ENCODE measurements at regions of chr20 and their contacts with region 1.

Region 1: DNA sequence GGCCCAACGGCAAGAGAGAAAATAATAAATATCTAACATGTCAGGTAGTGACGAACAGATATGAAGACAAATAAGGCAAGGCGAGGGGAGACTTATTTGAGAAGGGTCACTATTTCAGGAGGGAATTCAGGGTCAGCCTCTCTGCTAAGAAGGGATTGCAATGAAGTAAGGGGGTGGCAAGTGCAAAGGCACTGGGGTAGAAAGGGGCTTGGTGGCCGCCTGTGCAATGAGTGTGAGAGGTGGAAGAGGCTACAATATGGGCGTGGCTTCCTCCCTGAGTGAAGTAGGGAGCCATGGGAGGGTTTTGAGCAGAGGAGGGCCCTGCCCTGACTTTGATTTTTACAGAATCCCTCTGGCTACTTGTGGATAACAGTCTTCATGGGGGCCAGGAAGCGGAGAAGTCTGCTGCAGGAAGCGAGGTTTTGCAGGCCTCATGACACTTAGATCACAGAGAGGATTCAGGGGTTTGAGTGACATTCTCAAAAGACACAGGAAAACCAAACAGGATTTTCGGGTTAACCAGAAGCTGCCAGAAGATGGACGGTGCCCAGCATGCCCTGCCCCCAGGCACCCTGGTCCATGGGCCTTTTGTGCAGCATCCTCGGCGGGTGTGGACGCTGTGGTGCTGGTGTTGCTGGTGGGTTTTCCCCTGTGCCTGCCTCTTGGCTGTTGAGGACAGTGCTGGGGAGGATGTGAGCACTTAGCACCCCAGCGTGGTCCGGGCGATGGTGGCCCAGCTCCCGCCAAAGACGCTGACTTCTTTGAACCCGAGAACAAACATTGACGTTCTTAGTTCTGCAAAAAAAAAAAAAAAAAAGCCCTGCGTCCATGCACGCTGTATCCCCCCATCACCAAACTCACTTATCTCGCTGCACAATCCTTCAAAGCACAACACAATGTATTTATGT is 124.2 kb upstream of the PTPN1 start:
- DNase-seq: no peak
- ATAC-seq: no peak
- H3K4me3 ChIP-seq: no peak overlapping the region
- H3K27ac ChIP-seq: peak overlapping the region; percentile 27
- H3K4me1 ChIP-seq: peaks cover 98% of the 10 kb centered on the region
- H3K27me3 ChIP-seq: no peaks in the 10 kb centered on the region
- CTCF ChIP-seq: no peak
- EP300 ChIP-seq: no peak
- POLR2A ChIP-seq: no peak
- RAD21 ChIP-seq: no peak

Region 2: DNA sequence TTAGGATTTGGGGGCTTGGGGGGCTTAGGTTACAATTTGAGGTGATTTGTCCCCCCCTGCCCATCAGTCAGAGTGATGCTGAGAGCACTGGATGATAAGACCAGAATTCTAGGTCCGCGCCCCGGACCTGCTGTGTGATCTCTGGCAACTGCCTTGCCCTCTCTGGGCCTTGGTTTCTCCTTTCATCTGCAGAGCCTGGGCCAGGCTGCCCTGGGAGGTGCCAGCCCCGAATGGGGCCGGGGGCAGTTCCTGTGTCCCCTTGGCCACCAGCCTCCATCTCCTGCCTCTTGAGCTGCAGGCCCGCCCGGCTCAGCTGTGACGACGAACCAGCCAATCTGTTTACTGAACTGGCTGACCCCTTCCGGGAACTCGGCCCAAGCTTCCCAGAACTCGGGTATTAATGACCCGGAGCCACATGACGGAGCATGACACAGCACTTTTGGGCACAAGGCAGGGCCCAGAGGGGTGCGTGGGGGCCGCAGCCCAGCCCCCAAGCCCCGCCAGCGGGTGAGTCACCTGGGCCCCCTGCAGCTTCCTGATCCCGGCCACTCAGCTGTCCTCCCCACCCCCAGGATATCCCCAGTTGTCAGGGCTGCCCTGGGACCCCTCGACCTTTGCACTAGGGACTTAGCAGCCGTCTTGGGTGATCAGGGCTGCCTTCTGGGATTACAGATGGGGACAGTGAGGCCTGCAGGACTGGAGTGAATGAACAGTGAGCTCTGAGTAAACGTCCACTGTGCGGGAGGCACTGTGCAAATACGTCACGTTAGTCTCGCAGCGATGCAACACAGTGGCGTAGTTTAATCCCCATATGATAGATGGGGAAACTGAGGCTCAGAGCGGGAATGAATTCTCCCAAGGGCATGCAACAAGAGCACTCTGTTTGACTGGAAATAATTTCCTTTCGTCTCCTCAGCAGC is 93.4 kb before region 1 on chr20:
- CTCF ChIA-PET with region 1: no interaction called
- POLR2A ChIA-PET with region 1: interaction called, 13 read pairs
- in situ Hi-C with region 1: no loop called
- intact Hi-C with region 1: no loop called
- DNase-seq: peak; percentile 97
- ATAC-seq: peak; percentile 69
- H3K4me3 ChIP-seq: peak overlapping the region in 1 of 3 experiments; percentile 39; a peak in 3 of 6 replicates
- H3K27ac ChIP-seq: peak overlapping the region; percentile 77
- H3K4me1 ChIP-seq: peaks cover 68% of the 10 kb centered on the region
- H3K27me3 ChIP-seq: no peaks in the 10 kb centered on the region
- CTCF ChIP-seq: peak; percentile 41
- EP300 ChIP-seq: peak; percentile 96 to 99
- POLR2A ChIP-seq: peak in 1 of 2 experiments; percentile 14; a peak in 2 of 4 replicates
- RAD21 ChIP-seq: peak; percentile 63

Region 3: GRCh38 chr20:50320910-50321796 is 64.8 kb before region 1 on chr20:
- CTCF ChIA-PET with region 1: no interaction called
- POLR2A ChIA-PET with region 1: interaction called, 23 read pairs
- in situ Hi-C with region 1: no loop called
- intact Hi-C with region 1: no loop called
- DNase-seq: peak; percentile 85
- ATAC-seq: peak; percentile 95
- H3K4me3 ChIP-seq: peak overlapping the region; percentile 54 to 87 (median 62)
- H3K27ac ChIP-seq: peak overlapping the region; percentile 11
- H3K4me1 ChIP-seq: peaks cover 56% of the 10 kb centered on the region
- H3K27me3 ChIP-seq: no peaks in the 10 kb centered on the region; a peak in 2 of 5 replicates
- CTCF ChIP-seq: peak; percentile 59
- EP300 ChIP-seq: peak; percentile 18 to 47; a peak in 2 of 4 replicates
- POLR2A ChIP-seq: peak; percentile 16 to 86; a peak in 3 of 4 replicates
- RAD21 ChIP-seq: peak; percentile 49; the same call in 1 of the 2 replicates

Region 4: GRCh38 chr20:50372776-50373167 is 13.2 kb before region 1 on chr20:
- CTCF ChIA-PET with region 1: interaction called, 3 read pairs
- POLR2A ChIA-PET with region 1: interaction called, 44 read pairs
- in situ Hi-C with region 1: no loop called
- intact Hi-C with region 1: loop called (anchors 1 kb)
- DNase-seq: peak; percentile 80
- ATAC-seq: peak; percentile 5; the same call in 2 of the 3 replicates
- H3K4me3 ChIP-seq: no peak overlapping the region
- H3K27ac ChIP-seq: peak overlapping the region; percentile 45
- H3K4me1 ChIP-seq: peaks cover 82% of the 10 kb centered on the region
- H3K27me3 ChIP-seq: no peaks in the 10 kb centered on the region
- CTCF ChIP-seq: 0 out of 2 replicates have a peak, but pooled peaks have one; percentile 4
- EP300 ChIP-seq: peak; percentile 64 to 71; a peak in 3 of 4 replicates
- POLR2A ChIP-seq: 0 out of 4 replicates have a peak, but pooled peaks of 1 of the 2 experiments have one; percentile 33
- RAD21 ChIP-seq: no peak

Region 5: GRCh38 chr20:50415516-50416113 is 29.6 kb after region 1 on chr20:
- CTCF ChIA-PET with region 1: no interaction called
- POLR2A ChIA-PET with region 1: interaction called, 12 read pairs
- in situ Hi-C with region 1: no loop called
- intact Hi-C with region 1: no loop called
- DNase-seq: peak; percentile 86
- ATAC-seq: peak; percentile 86
- H3K4me3 ChIP-seq: peak overlapping the region; percentile 16 to 58 (median 40)
- H3K27ac ChIP-seq: peak overlapping the region; percentile 63
- H3K4me1 ChIP-seq: peaks cover 88% of the 10 kb centered on the region
- H3K27me3 ChIP-seq: no peaks in the 10 kb centered on the region
- CTCF ChIP-seq: peak; percentile 28
- EP300 ChIP-seq: no peak
- POLR2A ChIP-seq: peak; percentile 40 to 67
- RAD21 ChIP-seq: peak; percentile 35

Region 6: DNA sequence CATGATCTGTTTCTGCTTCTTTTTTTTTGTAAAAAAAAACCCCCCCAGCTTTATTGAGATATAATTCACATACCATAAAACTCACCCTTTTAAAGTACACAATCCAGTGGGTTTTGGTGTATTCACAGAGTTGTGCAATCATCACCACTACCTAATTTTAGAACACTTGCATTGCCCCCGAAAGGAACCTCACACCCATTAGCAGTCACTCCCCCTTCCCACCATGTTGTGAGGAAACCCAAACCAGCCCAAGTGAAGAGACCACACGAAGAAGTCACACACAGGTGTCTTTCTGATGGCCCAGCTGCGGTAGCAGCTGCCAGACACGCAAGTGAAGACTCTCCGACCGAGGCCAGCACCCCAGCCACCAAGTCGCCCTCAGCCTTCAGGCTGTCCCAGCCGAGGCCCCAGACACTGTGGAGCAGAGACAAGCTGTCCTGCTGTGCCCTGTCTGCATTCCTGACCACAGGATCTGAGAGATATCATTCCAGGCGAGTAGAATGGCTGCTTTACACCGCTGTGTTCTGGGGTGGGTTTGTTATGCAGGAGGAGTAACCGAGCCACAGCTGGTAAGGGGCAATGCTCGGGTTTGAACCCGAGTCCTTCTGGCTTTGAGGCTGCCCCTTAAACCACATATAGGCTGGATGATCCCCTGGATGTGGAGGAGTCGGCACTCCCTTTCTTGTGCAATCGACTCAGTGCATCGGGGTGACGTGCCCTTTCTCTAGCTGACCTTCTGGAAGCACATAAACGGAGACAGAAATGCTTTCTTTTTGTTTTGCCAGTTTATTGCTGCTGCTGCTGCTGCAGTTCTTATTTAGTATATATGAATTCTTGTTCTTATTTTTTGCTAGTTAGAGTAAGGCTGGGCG is 65.1 kb after region 1 on chr20:
- CTCF ChIA-PET with region 1: no interaction called
- POLR2A ChIA-PET with region 1: interaction called, 26 read pairs
- in situ Hi-C with region 1: no loop called
- intact Hi-C with region 1: no loop called
- DNase-seq: peak; percentile 68
- ATAC-seq: peak; percentile 76
- H3K4me3 ChIP-seq: peak overlapping the region; percentile 57 to 78 (median 61)
- H3K27ac ChIP-seq: peak overlapping the region; percentile 39
- H3K4me1 ChIP-seq: peaks cover 100% of the 10 kb centered on the region
- H3K27me3 ChIP-seq: no peaks in the 10 kb centered on the region; a peak in 1 of 5 replicates
- CTCF ChIP-seq: no peak
- EP300 ChIP-seq: peak in 1 of 2 experiments; percentile 1; a peak in 1 of 4 replicates
- POLR2A ChIP-seq: peak; percentile 22 to 31; a peak in 1 of 4 replicates
- RAD21 ChIP-seq: 0 out of 2 replicates have a peak, but pooled peaks have one; percentile 23

Region 7: GRCh38 chr20:50504231-50504823 is 118.3 kb after region 1 on chr20:
- CTCF ChIA-PET with region 1: no interaction called
- POLR2A ChIA-PET with region 1: no interaction called
- in situ Hi-C with region 1: no loop called
- intact Hi-C with region 1: no loop called
- DNase-seq: peak; percentile 37
- ATAC-seq: no peak
- H3K4me3 ChIP-seq: no peak overlapping the region
- H3K27ac ChIP-seq: no peak overlapping the region
- H3K4me1 ChIP-seq: peaks cover 46% of the 10 kb centered on the region
- H3K27me3 ChIP-seq: no peaks in the 10 kb centered on the region
- CTCF ChIP-seq: peak; percentile 44
- EP300 ChIP-seq: no peak
- POLR2A ChIP-seq: no peak
- RAD21 ChIP-seq: no peak